Gastrocnemius medialis (tissue), 4 donors: ENCODE measurements at regions of chr15 and their contacts with region 1.

Region 1: GRCh38 chr15:38252481-38253412 is at the start of gene SPRED1:
- DNase-seq: peak; percentile 42 to 45
- ATAC-seq: peak; percentile 50 to 55
- H3K4me3 ChIP-seq: peak within 1 kb of the TSS; percentile 72 to 94 (median 88)
- H3K27ac ChIP-seq: peak within 1 kb of the TSS; percentile 87 to 95 (median 93)
- H3K4me1 ChIP-seq: peaks cover 0 to 29% of the 10 kb centered on the region in 2 donors
- H3K27me3 ChIP-seq: no peaks in the 10 kb centered on the region
- CTCF ChIP-seq: no peak
- POLR2A ChIP-seq: no peak
- total RNA-seq, gene SPRED1: 3.7 to 7.2 (median 5.3) TPM

Region 2: GRCh38 chr15:36579792-36580431 is 1672.8 kb before region 1 on chr15:
- in situ Hi-C with region 1: no loop called
- intact Hi-C with region 1: loop called (anchors 10 kb)
- DNase-seq: peak; percentile 30 to 42
- ATAC-seq: peak; percentile 55 to 61
- H3K4me3 ChIP-seq: peak overlapping the region; percentile 85 to 95 (median 90)
- H3K27ac ChIP-seq: peak overlapping the region; percentile 84 to 87 (median 85)
- H3K4me1 ChIP-seq: peaks cover 16 to 17% of the 10 kb centered on the region in 2 donors
- H3K27me3 ChIP-seq: no peaks in the 10 kb centered on the region
- CTCF ChIP-seq: no peak
- POLR2A ChIP-seq: peak in 1 of 2 donors; percentile 10

Region 3: GRCh38 chr15:38072348-38073177 is 180.2 kb before region 1 on chr15:
- in situ Hi-C with region 1: no loop called
- intact Hi-C with region 1: loop called (anchors 5 kb)
- DNase-seq: peak in 1 of 2 donors; percentile 21
- ATAC-seq: peak; percentile 39 to 52
- H3K4me3 ChIP-seq: peak overlapping the region; percentile 40 to 66 (median 58)
- H3K27ac ChIP-seq: peak overlapping the region; percentile 55 to 76 (median 66)
- H3K4me1 ChIP-seq: peaks cover 5 to 13% of the 10 kb centered on the region in 2 donors
- H3K27me3 ChIP-seq: peaks cover 0 to 4% (median 0%) of the 10 kb centered on the region in 3 donors
- CTCF ChIP-seq: no peak
- POLR2A ChIP-seq: no peak

Region 4: GRCh38 chr15:38354315-38354929 is 101.7 kb after region 1 on chr15:
- in situ Hi-C with region 1: no loop called
- intact Hi-C with region 1: loop called (anchors 10 kb)
- DNase-seq: peak; percentile 5 to 29
- ATAC-seq: no peak
- H3K4me3 ChIP-seq: no peak overlapping the region
- H3K27ac ChIP-seq: no peak overlapping the region
- H3K4me1 ChIP-seq: no peaks in the 10 kb centered on the region
- H3K27me3 ChIP-seq: no peaks in the 10 kb centered on the region
- CTCF ChIP-seq: peak; percentile 49 to 76 (median 56)
- POLR2A ChIP-seq: no peak

Region 5: DNA sequence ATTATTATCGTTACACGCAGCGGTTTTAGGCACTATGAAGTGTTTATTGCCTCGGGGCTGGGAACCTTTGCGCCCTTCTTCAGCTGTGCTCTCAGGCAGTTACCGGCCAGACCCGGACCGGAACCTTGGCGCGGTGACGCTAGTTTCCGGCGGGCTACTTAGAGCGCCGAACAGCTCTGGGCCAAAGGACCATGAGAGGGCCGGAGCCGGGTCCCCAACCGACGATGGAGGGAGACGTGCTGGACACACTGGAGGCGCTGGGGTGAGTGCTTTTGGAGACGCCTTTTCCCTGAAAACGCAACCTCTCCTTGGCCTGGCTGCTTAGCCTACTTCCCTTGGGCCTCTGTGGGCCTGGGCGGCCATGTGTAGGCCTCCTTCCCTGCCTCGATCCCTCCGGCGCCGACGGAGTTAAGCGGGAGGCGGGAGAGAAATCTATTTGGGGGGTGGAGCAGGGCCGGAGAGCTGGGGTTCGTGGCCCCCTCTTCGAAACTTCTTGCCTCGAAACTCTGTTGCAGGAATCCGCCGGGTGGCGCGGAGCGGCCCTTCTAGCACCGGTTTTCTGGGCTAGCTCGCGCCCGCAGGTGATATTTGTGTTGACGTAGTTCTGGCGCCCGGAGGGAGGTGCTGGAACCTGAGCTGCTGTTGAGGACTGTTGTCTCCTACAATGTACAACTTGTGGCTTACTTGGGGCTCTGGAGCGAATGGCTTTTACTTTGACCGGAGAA is 201.4 kb after region 1 on chr15 and contains the start of gene FAM98B:
- in situ Hi-C with region 1: no loop called
- intact Hi-C with region 1: loop called (anchors 5 kb)
- DNase-seq: peak; percentile 73 to 84
- ATAC-seq: peak; percentile 94 to 96
- H3K4me3 ChIP-seq: peak within 1 kb of the TSS; percentile 89 to 96 (median 91)
- H3K27ac ChIP-seq: peak within 1 kb of the TSS; percentile 91 to 96 (median 91)
- H3K4me1 ChIP-seq: peaks cover 12 to 18% of the 10 kb centered on the region in 2 donors
- H3K27me3 ChIP-seq: no peaks in the 10 kb centered on the region
- CTCF ChIP-seq: peak in 3 of 5 experiments; percentile 17 to 48 (median 32)
- POLR2A ChIP-seq: peak in 1 of 2 donors; percentile 47
- total RNA-seq, gene FAM98B: 3.9 to 8.6 (median 6.1) TPM